PC-3 (cell line): ENCODE measurements at regions of chr7 and their contacts with region 1.

Region 1: GRCh38 chr7:27520815-27521790 is 141.6 kb downstream of the HIBADH start:
- DNase-seq: no peak
- ATAC-seq: no peak
- H3K4me3 ChIP-seq: no peak overlapping the region
- H3K27ac ChIP-seq: no peak overlapping the region
- H3K4me1 ChIP-seq: no peaks in the 10 kb centered on the region
- H3K27me3 ChIP-seq: no peaks in the 10 kb centered on the region
- CTCF ChIP-seq: no peak

Region 2: DNA sequence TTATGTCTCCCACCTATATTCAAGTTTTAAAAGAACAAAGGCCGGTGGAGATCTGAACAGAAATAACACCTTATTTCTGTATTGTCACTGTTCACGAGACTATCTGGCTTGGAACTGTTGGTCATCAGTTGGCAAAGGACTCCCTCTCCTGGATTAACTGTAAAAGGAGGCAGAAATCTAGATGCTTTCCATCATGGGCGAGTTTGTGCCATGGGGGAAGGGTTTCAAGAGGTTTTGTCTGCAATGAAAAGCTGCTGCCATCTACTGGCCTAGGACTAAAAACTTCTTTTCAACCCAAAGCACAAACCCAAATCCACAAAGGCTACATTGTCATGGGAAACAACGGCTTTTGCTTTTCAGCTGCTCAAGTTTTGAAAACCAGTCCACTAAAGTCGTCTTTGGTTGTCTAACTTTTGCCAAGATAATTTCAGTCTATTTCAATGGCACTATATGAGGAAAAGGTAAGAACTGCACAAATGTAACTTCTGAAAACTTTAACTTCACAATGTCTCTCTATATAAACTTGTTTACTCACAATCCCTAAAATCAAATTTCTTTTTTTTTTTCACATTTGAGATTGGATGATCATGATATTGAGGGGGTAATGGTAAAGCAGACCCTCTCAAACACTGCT is 853.5 kb before region 1 on chr7:
- CTCF ChIA-PET with region 1: no interaction called
- POLR2A ChIA-PET with region 1: no interaction called
- intact Hi-C with region 1: no loop called
- DNase-seq: peak; percentile 94
- ATAC-seq: peak; percentile 93
- H3K4me3 ChIP-seq: no peak overlapping the region
- H3K27ac ChIP-seq: no peak overlapping the region
- H3K4me1 ChIP-seq: peaks cover 24% of the 10 kb centered on the region
- H3K27me3 ChIP-seq: no peaks in the 10 kb centered on the region
- CTCF ChIP-seq: peak; percentile 97

Region 3: GRCh38 chr7:27532314-27532713 is 11.2 kb after region 1 on chr7:
- CTCF ChIA-PET with region 1: no interaction called
- POLR2A ChIA-PET with region 1: interaction called, 10 read pairs
- intact Hi-C with region 1: no loop called
- DNase-seq: no peak
- ATAC-seq: no peak
- H3K4me3 ChIP-seq: no peak overlapping the region
- H3K27ac ChIP-seq: no peak overlapping the region
- H3K4me1 ChIP-seq: peaks cover 13% of the 10 kb centered on the region
- H3K27me3 ChIP-seq: no peaks in the 10 kb centered on the region
- CTCF ChIP-seq: no peak